ENCODE measurements at regions of chr17 and their contacts with region 1.

Region 1: DNA sequence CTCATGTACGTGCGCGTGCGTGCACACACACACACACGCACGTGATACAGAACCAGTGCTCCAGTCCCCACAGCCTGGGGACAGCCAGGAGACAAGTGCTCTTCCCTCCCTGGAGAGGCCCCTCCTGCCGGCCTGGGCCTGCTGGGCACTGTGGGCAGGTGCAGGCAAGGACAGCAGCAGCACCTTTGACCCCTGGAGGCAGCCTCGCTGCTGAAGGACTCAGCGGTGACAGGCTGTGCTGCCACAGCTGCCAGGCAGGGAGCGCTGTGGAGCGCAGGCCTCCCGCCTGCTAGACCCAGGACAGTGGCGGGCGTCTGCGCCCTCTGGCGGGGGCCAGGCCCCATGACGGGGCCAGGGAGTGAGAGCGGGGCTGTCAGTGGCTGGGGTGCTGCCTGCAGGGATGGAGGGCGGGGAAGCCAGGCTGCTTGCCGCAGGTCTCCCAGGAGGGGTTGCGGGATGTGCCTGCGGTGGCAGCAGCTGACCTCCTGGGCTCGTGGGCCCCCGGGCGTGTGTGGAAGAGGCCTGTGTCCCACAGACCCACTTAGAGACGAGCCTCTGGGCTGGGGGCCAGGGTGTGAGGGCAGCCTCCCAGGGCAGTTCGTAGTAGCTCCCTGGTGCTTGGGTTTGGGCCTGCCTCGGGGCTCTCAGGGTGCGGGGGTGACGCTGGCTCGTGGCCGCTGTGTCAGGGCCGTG is 63.5 kb upstream of the PVALEF start:
- DNase-seq: peak; percentile 88 to 98
- ATAC-seq: peak; percentile 67 to 91
- H3K4me3 ChIP-seq: no peak overlapping the region
- H3K27ac ChIP-seq: no peak overlapping the region; a peak in 1 of 6 replicates
- H3K4me1 ChIP-seq: peaks cover 24% of the 10 kb centered on the region
- CTCF ChIP-seq: peak; percentile 100
- EP300 ChIP-seq: no peak
- POLR2A ChIP-seq: no peak
- RAD21 ChIP-seq: peak; percentile 92 to 95

Region 2: GRCh38 chr17:80991645-80992076 is 110.1 kb before region 1 on chr17 and contains the start of gene CHMP6:
- CTCF ChIA-PET with region 1: interaction called, 37 read pairs
- POLR2A ChIA-PET with region 1: no interaction called
- DNase-seq: peak; percentile 85 to 87
- ATAC-seq: peak; percentile 42 to 51
- H3K4me3 ChIP-seq: peak within 1 kb of the TSS; percentile 92
- H3K27ac ChIP-seq: peak within 1 kb of the TSS; percentile 89 to 95
- H3K4me1 ChIP-seq: peaks cover 20% of the 10 kb centered on the region
- CTCF ChIP-seq: peak; percentile 13; the same call in 1 of the 3 replicates
- EP300 ChIP-seq: no peak
- POLR2A ChIP-seq: peak; percentile 29; the same call in 1 of the 2 replicates
- RAD21 ChIP-seq: no peak
- polyA plus RNA-seq, gene CHMP6: 17.8 and 28.9 TPM in 2 replicates

Region 3: DNA sequence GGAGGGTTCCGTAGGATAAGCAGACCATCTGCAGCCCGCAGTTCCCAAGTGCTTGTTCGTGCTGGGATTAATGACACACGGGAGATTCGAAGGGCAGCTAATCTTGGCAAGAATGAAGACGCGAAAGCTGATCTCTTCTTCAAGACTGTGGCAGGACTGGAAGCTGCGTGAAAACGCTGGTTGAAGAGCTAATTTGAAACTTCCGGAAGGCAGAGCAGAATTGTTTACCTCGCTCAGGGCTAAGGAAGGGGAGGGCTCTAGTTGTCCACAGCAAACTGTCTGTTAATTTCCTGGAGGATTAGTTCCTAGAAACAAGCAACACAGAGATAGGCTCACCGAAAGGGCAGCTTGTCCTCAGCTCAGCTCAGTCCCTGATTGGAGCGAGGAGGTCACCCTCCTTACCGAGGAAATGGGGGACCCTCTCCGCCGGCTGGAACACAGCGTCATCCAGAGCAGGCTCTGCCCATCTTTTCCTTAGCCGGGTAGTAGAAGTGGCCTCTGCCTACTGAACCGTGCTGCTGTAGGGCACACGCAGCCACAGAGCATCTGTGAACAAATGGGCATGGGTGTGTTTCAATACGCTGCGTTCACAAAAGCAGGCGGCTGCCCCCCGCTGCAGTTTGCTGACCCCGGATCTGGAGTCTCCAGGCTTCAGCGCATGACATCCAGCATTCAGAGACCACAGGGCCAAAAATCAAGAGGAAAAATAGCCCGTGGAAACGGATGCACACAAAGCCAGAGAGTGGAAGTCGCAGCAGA is 83.5 kb before region 1 on chr17:
- CTCF ChIA-PET with region 1: interaction called, 880 read pairs
- POLR2A ChIA-PET with region 1: no interaction called
- DNase-seq: no peak
- ATAC-seq: peak in 1 of 2 experiments; percentile 27; a peak in 1 of 6 replicates
- H3K4me3 ChIP-seq: no peak overlapping the region
- H3K27ac ChIP-seq: no peak overlapping the region
- H3K4me1 ChIP-seq: no peaks in the 10 kb centered on the region
- CTCF ChIP-seq: no peak
- EP300 ChIP-seq: no peak
- POLR2A ChIP-seq: no peak
- RAD21 ChIP-seq: no peak

Region 4: DNA sequence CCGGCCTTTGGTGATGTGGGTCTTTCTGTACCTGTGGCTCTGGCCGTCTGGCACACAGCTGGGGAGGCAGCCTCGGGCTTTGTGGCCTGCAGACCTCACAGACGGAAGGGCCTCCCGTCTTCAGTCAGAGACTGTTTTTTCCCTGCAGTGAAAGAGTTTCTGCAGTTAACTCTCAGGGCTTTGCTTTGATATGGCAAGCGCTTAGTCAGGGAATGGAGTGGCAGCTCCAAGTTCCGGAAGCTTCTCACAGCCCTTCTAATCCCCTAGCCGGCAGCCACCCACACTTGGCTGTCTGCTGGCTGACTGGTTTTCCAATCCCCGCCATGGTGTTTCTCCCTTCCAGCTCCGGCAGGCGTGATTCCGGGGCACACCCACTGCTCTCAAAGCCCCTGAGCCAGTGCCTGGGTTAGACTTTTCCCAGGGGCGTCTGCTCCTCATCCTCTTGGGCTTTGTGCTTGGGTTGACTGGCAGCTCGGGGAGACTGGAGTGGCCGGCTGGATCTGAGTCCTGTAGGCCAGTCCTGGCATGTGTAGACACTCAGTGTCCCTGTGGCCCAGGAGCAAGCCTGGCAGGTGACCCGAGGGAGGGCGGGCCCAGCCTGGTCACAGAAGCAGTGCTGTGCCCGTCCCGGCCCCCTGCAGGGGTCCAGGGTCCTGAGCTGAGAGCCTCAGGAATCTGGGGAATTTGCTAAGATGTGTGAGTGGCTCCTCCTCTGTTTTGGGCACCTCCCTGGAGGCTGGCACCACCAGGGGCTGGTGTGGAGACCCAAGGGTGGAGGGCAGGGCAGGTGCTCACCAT is 36.9 kb before region 1 on chr17:
- CTCF ChIA-PET with region 1: interaction called, 41 read pairs
- POLR2A ChIA-PET with region 1: no interaction called
- DNase-seq: no peak
- ATAC-seq: no peak
- H3K4me3 ChIP-seq: no peak overlapping the region
- H3K27ac ChIP-seq: no peak overlapping the region
- H3K4me1 ChIP-seq: no peaks in the 10 kb centered on the region
- CTCF ChIP-seq: no peak
- EP300 ChIP-seq: no peak
- POLR2A ChIP-seq: no peak
- RAD21 ChIP-seq: no peak

Region 5: GRCh38 chr17:81083125-81083765 is 18.5 kb before region 1 on chr17:
- CTCF ChIA-PET with region 1: interaction called, 66 read pairs
- POLR2A ChIA-PET with region 1: no interaction called
- DNase-seq: no peak
- ATAC-seq: no peak
- H3K4me3 ChIP-seq: no peak overlapping the region
- H3K27ac ChIP-seq: no peak overlapping the region
- H3K4me1 ChIP-seq: no peaks in the 10 kb centered on the region
- CTCF ChIP-seq: no peak
- EP300 ChIP-seq: no peak
- POLR2A ChIP-seq: no peak
- RAD21 ChIP-seq: no peak

Measured in A549 (cell line).